ENCODE measurements at regions of chr6 and their contacts with region 1.

Region 1: DNA sequence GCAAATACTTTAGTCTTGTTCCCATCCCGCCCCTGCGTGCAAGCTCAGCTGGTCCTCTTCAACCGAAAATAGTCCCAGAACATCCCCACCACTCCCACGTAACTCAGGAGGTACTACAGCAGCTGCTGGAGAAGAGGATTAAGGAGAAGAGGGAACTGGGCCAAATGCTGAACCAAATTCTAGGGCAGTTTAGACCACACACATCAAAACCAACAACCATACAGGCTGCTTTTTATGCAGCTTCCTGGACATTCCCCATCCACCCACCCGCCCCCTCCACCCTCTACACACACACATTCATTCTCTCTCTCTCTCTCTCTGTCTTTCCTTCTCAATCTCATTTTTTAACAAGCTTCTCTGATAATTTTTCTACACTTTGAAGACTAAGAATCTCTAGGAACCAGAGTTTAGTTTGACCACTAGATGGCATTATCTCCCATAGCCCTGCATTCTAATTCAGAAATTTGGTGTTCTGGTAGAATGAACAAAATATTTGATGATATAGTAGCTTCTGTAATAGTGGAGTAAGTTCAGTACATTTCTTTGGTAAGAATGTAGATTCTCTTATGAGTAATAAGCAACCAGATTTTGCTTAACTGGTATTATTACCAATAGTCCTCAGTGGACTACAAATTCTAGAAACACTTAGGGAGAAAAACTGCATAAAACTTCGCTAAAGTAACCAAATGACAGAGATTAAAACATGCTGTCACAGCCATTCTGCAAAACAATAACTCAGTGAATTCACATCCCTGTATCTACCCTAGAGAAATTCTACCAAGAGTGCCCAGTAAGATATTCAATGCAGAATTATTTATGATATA is 52.1 kb upstream of the BEND6 start:
- DNase-seq: no peak
- H3K4me3 ChIP-seq: no peak overlapping the region
- H3K27ac ChIP-seq: peak overlapping the region in 2 of 4 donors; percentile 10 to 53
- H3K4me1 ChIP-seq: peaks cover 0 to 38% (median 29%) of the 10 kb centered on the region in 4 donors
- H3K27me3 ChIP-seq: no peaks in the 10 kb centered on the region
- CTCF ChIP-seq: peak; percentile 12 to 77 (median 51)
- EP300 ChIP-seq: no peak
- POLR2A ChIP-seq: no peak

Region 2: DNA sequence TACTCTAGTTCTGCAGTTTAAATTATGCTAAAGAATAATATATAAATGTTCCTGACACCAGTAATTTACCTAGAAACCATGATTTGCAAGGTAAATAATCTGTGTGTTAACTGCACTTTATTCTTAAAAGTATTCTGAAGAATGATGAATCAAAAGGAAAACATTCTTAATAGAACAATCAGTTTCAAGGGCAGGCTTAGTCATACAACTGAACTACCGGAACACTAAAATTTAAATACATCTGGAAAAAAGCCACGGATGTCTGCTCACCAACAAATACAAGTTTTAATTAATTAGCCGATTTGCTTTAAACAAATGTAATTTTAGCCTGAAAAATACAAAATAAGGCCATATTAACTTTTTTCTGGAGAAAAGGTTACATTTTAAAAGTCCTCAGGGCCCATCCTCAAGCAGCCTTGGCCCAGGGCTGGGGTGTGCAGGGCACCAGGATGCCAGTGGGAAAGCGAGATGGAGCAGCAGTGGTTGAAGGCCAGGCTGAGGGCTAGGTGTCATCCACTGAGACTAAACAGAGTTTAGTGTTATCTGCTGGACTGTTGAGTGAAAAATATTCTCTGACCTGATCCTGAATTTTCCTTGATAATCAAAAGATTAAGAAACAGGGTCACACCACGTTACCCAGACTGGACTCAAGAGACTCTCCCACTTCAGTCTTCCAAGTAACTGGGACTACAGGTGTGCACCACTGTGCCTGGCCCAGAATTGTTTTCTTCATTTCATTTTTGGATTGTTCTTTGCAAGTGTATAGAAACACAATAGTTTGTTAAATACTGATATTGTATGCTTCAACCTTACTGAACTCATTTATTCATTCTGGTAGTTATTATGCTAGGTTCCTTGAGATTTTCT is 172.0 kb before region 1 on chr6:
- intact Hi-C with region 1: no loop called
- DNase-seq: no peak
- H3K4me3 ChIP-seq: no peak overlapping the region
- H3K27ac ChIP-seq: peak overlapping the region; percentile 5 to 75 (median 63)
- H3K4me1 ChIP-seq: peaks cover 0 to 76% (median 64%) of the 10 kb centered on the region in 4 donors
- H3K27me3 ChIP-seq: no peaks in the 10 kb centered on the region
- CTCF ChIP-seq: no peak
- EP300 ChIP-seq: no peak
- POLR2A ChIP-seq: no peak

Region 3: GRCh38 chr6:56955171-56956045 is 52.6 kb after region 1 on chr6:
- intact Hi-C with region 1: loop called (anchors 2 kb)
- DNase-seq: peak; percentile 91
- H3K4me3 ChIP-seq: peak overlapping the region; percentile 46 to 71 (median 68)
- H3K27ac ChIP-seq: peak overlapping the region; percentile 59 to 81 (median 78)
- H3K4me1 ChIP-seq: peaks cover 0 to 21% (median 10%) of the 10 kb centered on the region in 4 donors
- H3K27me3 ChIP-seq: no peaks in the 10 kb centered on the region
- CTCF ChIP-seq: peak in 2 of 4 experiments; percentile 60 to 65
- EP300 ChIP-seq: no peak
- POLR2A ChIP-seq: no peak

Region 4: DNA sequence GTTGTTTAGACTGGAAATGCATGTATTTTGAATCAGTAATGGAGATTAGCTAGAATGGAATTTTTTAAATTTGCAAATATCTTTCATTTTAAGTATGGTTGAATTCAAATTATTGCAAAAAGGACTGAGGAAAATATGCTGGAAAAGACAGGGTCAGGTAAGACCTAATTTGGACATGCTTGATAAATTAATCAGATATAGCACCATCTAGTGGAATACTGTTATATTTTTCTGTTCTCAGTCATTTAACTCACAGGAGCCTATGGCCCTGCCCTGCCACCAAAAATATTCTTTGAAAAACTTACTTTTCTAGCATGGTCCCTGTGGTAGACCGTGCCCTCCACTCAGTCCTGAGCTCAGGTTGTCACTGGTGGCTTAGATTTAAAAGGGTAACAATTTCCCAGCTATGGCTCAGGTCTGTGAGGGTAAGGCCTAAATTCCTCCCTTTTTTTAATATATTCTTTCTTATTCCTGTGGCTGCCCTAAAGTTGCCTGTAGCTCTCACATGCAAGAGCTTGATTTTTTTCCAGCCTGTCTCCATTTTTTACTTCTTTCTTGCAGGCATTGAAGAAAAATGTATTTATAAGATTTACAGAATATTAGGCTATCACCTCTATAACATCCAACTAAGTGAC is 118.3 kb after region 1 on chr6:
- intact Hi-C with region 1: loop called (anchors 2 kb)
- DNase-seq: no peak
- H3K4me3 ChIP-seq: no peak overlapping the region
- H3K27ac ChIP-seq: no peak overlapping the region
- H3K4me1 ChIP-seq: no peaks in the 10 kb centered on the region
- H3K27me3 ChIP-seq: no peaks in the 10 kb centered on the region
- CTCF ChIP-seq: peak in 3 of 4 experiments; percentile 29 to 61 (median 49)
- EP300 ChIP-seq: no peak
- POLR2A ChIP-seq: no peak

Region 5: GRCh38 chr6:57172136-57173055 is 269.5 kb after region 1 on chr6 and contains the start of gene BAG2:
- intact Hi-C with region 1: loop called (anchors 5 kb)
- DNase-seq: peak; percentile 97
- H3K4me3 ChIP-seq: peak within 1 kb of the TSS; percentile 65 to 88 (median 74)
- H3K27ac ChIP-seq: peak within 1 kb of the TSS; percentile 89 to 99 (median 92)
- H3K4me1 ChIP-seq: peaks cover 0 to 35% (median 29%) of the 10 kb centered on the region in 4 donors
- H3K27me3 ChIP-seq: no peaks in the 10 kb centered on the region
- CTCF ChIP-seq: peak in 3 of 4 experiments; percentile 15 to 49 (median 26)
- EP300 ChIP-seq: no peak
- POLR2A ChIP-seq: peak; percentile 63 to 75
- total RNA-seq, gene BAG2: 55.6 to 74.5 (median 60.0) TPM

Region 6: DNA sequence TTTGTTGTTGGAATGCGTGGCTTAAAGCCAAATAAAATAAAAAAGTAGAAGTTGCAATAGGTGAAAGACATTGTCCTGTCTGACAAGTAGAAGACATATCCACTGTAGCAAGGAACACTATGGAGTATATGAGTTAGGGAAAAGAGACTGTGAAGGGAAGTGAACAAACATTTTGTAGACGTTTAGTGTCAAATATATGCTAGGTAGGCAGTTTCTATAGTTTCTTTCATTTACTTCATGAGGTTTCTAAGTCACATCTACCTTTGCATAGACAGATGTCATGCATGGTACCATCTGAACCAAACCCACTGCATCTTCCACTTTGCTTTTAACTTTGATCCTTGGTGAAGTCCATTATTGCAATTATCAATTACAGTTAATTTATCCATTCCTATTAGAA is 424.5 kb after region 1 on chr6:
- intact Hi-C with region 1: loop called (anchors 2 kb)
- DNase-seq: no peak
- H3K4me3 ChIP-seq: no peak overlapping the region
- H3K27ac ChIP-seq: no peak overlapping the region
- H3K4me1 ChIP-seq: no peaks in the 10 kb centered on the region
- H3K27me3 ChIP-seq: no peaks in the 10 kb centered on the region
- CTCF ChIP-seq: no peak
- EP300 ChIP-seq: no peak
- POLR2A ChIP-seq: no peak